AG04449 (cell line): ENCODE measurements at regions of chr18 and their contacts with region 1.

Region 1: GRCh38 chr18:8982416-8983184 is 119.9 kb upstream of the NDUFV2 start:
- DNase-seq: peak; percentile 92
- H3K4me3 ChIP-seq: no peak overlapping the region
- CTCF ChIP-seq: peak; percentile 62

Region 2: GRCh38 chr18:8661754-8662569 is 320.6 kb before region 1 on chr18:
- CTCF ChIA-PET with region 1: interaction called, 121 read pairs
- POLR2A ChIA-PET with region 1: no interaction called
- DNase-seq: no peak
- H3K4me3 ChIP-seq: no peak overlapping the region
- CTCF ChIP-seq: no peak

Region 3: GRCh38 chr18:8794133-8794986 is 188.2 kb before region 1 on chr18:
- CTCF ChIA-PET with region 1: interaction called, 35 read pairs
- POLR2A ChIA-PET with region 1: no interaction called
- DNase-seq: no peak
- H3K4me3 ChIP-seq: no peak overlapping the region
- CTCF ChIP-seq: no peak

Region 4: GRCh38 chr18:8816816-8817215 is 165.8 kb before region 1 on chr18:
- CTCF ChIA-PET with region 1: interaction called, 13 read pairs
- POLR2A ChIA-PET with region 1: interaction called, 5 read pairs
- DNase-seq: no peak
- H3K4me3 ChIP-seq: no peak overlapping the region
- CTCF ChIP-seq: no peak

Region 5: DNA sequence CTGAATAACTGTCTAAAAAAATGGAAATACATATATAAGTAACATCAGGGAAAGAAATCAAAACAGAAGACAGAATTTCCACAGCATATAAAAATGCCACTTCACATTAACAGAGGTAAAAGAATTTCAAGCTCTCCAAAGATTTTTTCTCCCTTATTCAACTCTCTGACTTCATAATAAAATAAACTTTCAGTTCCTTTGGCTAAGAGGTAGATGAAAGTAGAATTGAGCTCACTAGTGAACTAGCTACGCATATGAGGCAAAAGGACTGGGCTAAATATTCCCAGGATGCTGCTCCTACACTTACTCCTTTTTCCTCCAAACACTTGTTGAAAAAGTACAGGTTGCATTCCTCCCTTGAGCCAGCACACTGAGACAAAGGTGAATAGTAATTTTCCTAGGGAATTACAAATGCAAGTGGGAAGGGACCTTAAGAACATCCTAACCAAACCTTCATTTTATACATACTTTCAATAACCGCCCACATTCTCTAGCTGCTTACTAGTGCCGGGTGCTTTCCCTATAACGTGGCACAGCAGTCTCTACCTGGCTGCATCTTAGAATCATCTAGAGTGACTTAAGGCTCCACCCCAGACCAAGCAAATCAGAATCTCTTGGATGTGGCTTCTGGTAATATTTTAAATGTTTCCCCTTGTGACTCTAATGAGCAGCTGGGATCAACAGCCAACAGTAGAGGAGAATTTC is 140.7 kb before region 1 on chr18:
- CTCF ChIA-PET with region 1: interaction called, 14 read pairs
- POLR2A ChIA-PET with region 1: interaction called, 3 read pairs
- DNase-seq: no peak
- H3K4me3 ChIP-seq: no peak overlapping the region
- CTCF ChIP-seq: no peak

Region 6: GRCh38 chr18:8969639-8970390 is 12.8 kb before region 1 on chr18:
- CTCF ChIA-PET with region 1: interaction called, 14 read pairs
- POLR2A ChIA-PET with region 1: no interaction called
- DNase-seq: no peak
- H3K4me3 ChIP-seq: no peak overlapping the region
- CTCF ChIP-seq: no peak